ENCODE measurements at regions of chr3 and their contacts with region 1.

Region 1: GRCh38 chr3:66500576-66501482 is at the start of gene LRIG1:
- DNase-seq: peak; percentile 98
- H3K4me3 Mint-ChIP-seq: peak within 1 kb of the TSS; percentile 90
- H3K27ac Mint-ChIP-seq: peak within 1 kb of the TSS; percentile 84
- H3K4me1 Mint-ChIP-seq: peaks cover 50% of the 10 kb centered on the region
- H3K27me3 Mint-ChIP-seq: peaks cover 3% of the 10 kb centered on the region
- total RNA-seq, gene LRIG1: 18.3 to 19.0 TPM

Region 2: DNA sequence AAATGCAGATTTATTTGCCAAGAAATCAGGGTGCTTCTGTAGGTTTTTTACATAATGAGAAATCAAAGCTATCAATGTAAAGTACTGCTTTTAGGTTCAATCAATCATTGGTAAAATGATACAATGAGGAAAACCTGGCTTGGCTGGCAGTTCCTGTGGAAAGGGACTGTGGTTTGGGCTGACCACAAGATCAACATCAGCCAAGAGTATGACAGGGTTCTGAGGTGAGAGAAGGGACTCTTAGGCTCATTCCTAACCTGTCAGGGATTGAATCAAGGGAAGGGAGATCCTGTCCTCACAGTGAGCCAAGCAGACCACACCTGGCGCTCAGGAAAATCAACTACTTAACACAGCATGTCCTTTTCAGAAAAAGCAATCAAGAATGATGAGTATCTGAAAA is 573.3 kb before region 1 on chr3:
- CTCF ChIA-PET with region 1: no interaction called
- intact Hi-C with region 1: no loop called
- DNase-seq: no peak
- H3K4me3 Mint-ChIP-seq: no peak overlapping the region
- H3K27ac Mint-ChIP-seq: no peak overlapping the region
- H3K4me1 Mint-ChIP-seq: no peaks in the 10 kb centered on the region
- H3K27me3 Mint-ChIP-seq: no peaks in the 10 kb centered on the region

Region 3: DNA sequence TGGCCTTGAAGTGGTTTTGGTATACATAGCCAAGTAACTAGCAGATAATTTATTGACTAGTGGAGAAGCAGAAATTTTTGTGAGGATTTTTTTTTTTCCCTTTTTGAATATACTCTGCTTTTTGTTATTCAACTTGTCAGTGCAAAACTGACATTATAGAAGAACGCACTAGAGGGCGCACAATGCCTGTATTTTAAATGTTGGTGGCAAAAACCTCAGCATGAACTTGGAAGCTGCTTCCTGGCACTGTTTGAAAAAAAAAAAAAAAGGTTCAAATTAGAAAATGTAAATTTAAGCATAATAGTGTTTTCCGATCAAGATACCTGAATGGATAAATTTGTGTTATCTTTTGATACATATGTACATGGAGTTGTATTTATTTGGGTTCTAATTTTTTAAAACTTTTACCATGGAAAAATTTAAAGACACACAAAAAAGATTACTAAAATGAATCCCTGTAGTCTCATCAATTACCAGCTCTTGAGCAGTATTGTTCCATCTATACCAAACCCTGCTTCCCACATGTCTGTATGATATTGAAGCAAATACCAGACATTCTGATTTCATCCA is 224.0 kb before region 1 on chr3:
- CTCF ChIA-PET with region 1: no interaction called
- intact Hi-C with region 1: loop called (anchors 2 kb)
- DNase-seq: peak; percentile 84
- H3K4me3 Mint-ChIP-seq: no peak overlapping the region
- H3K27ac Mint-ChIP-seq: no peak overlapping the region
- H3K4me1 Mint-ChIP-seq: peaks cover 24% of the 10 kb centered on the region
- H3K27me3 Mint-ChIP-seq: no peaks in the 10 kb centered on the region

Region 4: DNA sequence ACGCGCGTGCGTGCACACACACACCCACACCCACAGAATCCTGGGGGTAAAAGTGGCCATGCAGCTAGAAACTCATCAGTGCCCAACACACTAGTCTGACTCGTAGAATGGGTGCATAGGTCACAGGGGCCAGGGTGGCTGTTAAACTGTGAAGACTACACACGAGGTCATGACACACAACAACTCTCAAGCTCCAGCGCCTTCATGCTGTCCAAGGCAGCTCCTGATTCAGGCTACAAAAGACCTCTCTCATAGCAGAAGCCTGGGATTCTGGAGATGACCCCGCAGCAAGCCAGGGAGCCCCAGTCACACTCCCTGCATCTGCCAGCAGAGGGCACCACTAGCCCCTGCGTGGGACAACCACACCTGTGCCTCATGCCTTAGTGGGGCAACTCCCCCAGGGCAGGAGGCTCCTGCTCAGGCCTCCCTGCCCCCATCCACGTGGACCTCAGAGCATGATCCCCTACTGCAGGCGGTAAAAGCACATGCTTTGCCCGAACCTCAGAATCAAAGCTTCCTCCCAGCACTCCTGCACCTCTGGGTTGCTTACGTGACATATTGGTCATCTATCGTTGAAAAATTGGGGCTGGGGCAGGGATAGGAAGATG is 93.1 kb before region 1 on chr3:
- CTCF ChIA-PET with region 1: interaction called, 8 read pairs
- intact Hi-C with region 1: loop called (anchors 1 kb)
- DNase-seq: peak; percentile 81
- H3K4me3 Mint-ChIP-seq: no peak overlapping the region
- H3K27ac Mint-ChIP-seq: no peak overlapping the region
- H3K4me1 Mint-ChIP-seq: peaks cover 3% of the 10 kb centered on the region
- H3K27me3 Mint-ChIP-seq: no peaks in the 10 kb centered on the region

Region 5: DNA sequence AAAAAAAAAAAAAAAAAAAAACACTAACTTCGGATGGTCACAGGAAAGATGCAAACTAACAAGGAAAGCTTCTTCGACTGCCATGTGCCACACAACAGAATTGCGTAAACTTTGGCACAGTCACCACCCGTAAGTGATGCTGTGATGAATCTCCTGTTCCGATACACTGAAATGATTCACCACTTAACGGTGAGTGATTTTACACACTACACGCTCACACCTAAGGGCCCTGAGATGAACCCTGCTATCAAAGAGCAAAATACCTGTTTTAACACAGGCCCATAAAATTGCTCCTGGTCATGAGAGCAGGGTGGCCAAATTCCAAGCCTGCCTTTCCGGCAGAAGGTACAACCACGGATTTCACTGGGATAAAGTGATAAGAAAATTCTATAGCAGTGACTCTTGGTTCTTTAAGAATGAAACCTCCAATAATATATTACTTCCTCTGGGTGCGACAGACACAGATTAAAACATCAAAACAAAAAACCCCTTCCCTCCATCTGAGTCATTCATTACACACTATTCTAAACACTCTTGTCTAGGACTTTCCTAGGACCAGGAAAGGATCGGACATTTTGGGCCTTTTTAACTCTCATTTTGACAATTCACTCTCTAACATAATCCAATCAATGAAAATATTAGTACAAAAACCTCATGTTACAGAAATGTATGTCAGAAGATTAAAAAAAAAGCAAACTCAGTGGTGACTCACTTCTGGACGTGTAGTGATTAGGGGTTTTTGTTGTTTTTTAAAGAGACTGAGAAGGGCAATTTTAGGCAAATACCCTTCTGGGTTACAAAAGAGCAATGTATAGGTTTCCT is 28.3 kb before region 1 on chr3:
- CTCF ChIA-PET with region 1: no interaction called
- intact Hi-C with region 1: loop called (anchors 1 kb)
- DNase-seq: peak; percentile 77
- H3K4me3 Mint-ChIP-seq: peak overlapping the region; percentile 42
- H3K27ac Mint-ChIP-seq: peak overlapping the region; percentile 94
- H3K4me1 Mint-ChIP-seq: peaks cover 64% of the 10 kb centered on the region
- H3K27me3 Mint-ChIP-seq: no peaks in the 10 kb centered on the region

Measured in activated naive CD4-positive, alpha-beta T cell treated with anti-CD3 and anti-CD28 coated beads for 36 hours (primary cell).